ENCODE measurements at regions of chr4 and their contacts with region 1.

Region 1: GRCh38 chr4:33088713-33089112 is 2368.5 kb downstream of the PCDH7 start:
- DNase-seq: no peak
- H3K4me3 ChIP-seq: no peak overlapping the region
- H3K27ac ChIP-seq: no peak overlapping the region
- H3K4me1 ChIP-seq: no peaks in the 10 kb centered on the region
- H3K27me3 ChIP-seq: no peaks in the 10 kb centered on the region
- CTCF ChIP-seq: no peak
- EP300 ChIP-seq: no peak
- POLR2A ChIP-seq: no peak
- RAD21 ChIP-seq: no peak

Region 2: DNA sequence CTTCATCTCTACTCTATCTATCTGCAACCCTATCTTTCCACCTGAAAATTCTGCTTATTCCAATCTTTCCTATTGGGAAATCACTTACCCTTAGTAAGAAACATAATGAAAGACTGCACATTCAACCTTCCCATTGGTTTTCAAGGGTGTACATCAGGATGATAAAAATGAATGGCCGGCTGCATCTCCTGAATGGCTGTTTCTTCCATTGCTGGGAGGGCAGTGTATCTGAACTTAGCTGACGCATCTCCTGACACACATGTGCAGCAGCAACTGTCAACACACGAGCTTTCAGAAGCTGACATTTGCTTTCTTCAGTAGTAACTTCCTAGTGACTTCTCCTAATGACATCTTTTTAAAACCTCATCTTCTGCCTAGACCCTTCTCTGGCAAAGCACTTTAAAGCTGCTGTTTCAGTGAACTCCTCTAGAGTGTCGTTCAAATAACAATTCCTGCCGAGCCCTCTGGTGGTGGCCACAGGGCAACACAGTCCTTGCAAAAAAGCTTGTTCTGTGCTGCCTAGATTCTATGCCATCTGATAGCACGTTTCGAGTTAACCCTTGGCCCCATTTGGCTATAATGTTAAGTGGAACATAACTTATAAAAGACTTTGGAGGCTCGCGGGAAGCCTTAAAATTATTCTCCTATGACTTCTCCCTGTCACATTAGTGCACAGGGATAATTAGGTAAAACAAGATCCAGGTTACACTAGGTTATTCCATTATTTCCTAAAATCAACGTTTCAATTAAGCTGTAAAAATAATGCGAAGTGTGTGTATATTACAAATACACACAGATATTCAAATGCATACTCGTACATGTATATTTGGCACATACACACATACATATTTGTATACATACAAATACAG is 27.8 kb before region 1 on chr4:
- CTCF ChIA-PET with region 1: interaction called, 15 read pairs
- POLR2A ChIA-PET with region 1: no interaction called
- DNase-seq: peak; percentile 46 to 65
- H3K4me3 ChIP-seq: no peak overlapping the region
- H3K27ac ChIP-seq: no peak overlapping the region
- H3K4me1 ChIP-seq: peaks cover 0 to 3% (median 0%) of the 10 kb centered on the region in 4 experiments; a peak in 1 of 7 replicates
- H3K27me3 ChIP-seq: no peaks in the 10 kb centered on the region
- CTCF ChIP-seq: peak; percentile 70 to 99 (median 95)
- EP300 ChIP-seq: no peak
- POLR2A ChIP-seq: no peak
- RAD21 ChIP-seq: peak; percentile 76 to 81

Region 3: GRCh38 chr4:33171873-33172550 is 83.3 kb after region 1 on chr4:
- CTCF ChIA-PET with region 1: no interaction called
- POLR2A ChIA-PET with region 1: no interaction called
- DNase-seq: no peak
- H3K4me3 ChIP-seq: no peak overlapping the region
- H3K27ac ChIP-seq: no peak overlapping the region
- H3K4me1 ChIP-seq: no peaks in the 10 kb centered on the region
- H3K27me3 ChIP-seq: no peaks in the 10 kb centered on the region
- CTCF ChIP-seq: no peak
- EP300 ChIP-seq: no peak
- POLR2A ChIP-seq: no peak
- RAD21 ChIP-seq: no peak

Region 4: GRCh38 chr4:33200377-33200776 is 111.7 kb after region 1 on chr4:
- CTCF ChIA-PET with region 1: no interaction called
- POLR2A ChIA-PET with region 1: no interaction called
- DNase-seq: no peak
- H3K4me3 ChIP-seq: no peak overlapping the region
- H3K27ac ChIP-seq: no peak overlapping the region
- H3K4me1 ChIP-seq: no peaks in the 10 kb centered on the region; a peak in 1 of 7 replicates
- H3K27me3 ChIP-seq: no peaks in the 10 kb centered on the region
- CTCF ChIP-seq: no peak
- EP300 ChIP-seq: no peak
- POLR2A ChIP-seq: no peak
- RAD21 ChIP-seq: no peak

Measured in H1 (cell line).